Psoas muscle (tissue), 8 donors: ENCODE measurements at regions of chr22 and their contacts with region 1.

Region 1: DNA sequence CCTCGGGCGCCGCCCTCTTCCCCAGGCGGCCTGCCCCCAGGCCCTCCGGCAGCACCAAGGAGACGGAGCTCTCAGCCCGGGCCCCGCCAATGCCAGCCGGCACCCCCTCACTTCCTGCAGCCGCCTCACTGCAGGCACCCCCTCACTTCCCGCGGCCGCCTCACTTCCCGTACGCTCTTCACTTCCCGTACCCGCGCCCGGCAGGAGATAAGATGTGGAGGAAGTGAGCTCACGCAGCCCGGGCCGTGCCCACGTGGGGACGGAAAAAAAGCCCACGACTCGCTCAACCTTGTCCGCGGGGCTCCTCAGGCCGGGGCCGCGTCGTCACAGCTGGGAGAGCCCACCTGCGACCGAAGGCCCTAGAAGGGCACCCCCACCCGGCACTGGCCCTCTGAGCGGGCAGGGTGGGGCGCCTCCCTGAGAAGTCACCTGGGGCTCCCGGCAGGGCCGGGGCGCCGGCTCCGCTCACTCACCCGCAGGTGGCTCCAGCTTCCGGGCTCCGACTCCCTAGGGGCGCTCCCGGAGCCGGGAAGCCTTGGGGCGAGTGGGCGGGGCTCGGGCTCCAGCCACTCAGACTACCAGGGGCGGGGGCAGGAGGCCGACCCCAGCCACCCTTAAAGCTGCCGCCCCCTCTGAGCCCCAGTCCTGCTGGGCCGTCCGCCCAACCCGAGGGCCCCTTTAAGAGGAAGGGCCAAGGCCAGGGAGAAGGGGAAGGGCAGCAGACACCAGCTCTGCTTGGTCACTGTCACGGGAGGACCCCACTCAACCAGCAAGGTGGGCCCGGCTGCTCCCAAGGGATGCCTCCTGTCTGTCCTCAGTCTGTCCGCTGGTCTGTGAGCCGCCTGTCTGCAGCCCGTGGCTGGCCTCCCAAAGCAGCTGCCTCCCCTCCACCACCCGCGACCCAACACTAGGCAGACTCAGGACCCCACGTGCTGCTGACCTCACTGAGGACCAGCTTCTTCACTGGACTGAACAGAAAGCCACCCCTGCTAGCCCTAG is 31.4 kb downstream of the PISD start:
- DNase-seq: peak; percentile 87 to 89
- ATAC-seq: peak; percentile 36 to 75 (median 62)
- H3K4me3 ChIP-seq: peak overlapping the region; percentile 79
- H3K27ac ChIP-seq: peak overlapping the region; percentile 83
- H3K4me1 ChIP-seq: peaks cover 38% of the 10 kb centered on the region
- H3K27me3 ChIP-seq: no peaks in the 10 kb centered on the region
- CTCF ChIP-seq: no peak

Region 2: GRCh38 chr22:31530823-31531195 is 99.8 kb before region 1 on chr22:
- intact Hi-C with region 1: no loop called
- DNase-seq: no peak
- ATAC-seq: no peak
- H3K4me3 ChIP-seq: no peak overlapping the region
- H3K27ac ChIP-seq: no peak overlapping the region
- H3K4me1 ChIP-seq: no peaks in the 10 kb centered on the region
- H3K27me3 ChIP-seq: no peaks in the 10 kb centered on the region
- CTCF ChIP-seq: no peak

Region 3: GRCh38 chr22:31561238-31561887 is 69.3 kb before region 1 on chr22:
- intact Hi-C with region 1: loop called (anchors 1 to 5 kb)
- DNase-seq: peak; percentile 54 to 64
- ATAC-seq: peak; percentile 72 to 96 (median 92)
- H3K4me3 ChIP-seq: no peak overlapping the region
- H3K27ac ChIP-seq: no peak overlapping the region
- H3K4me1 ChIP-seq: no peaks in the 10 kb centered on the region
- H3K27me3 ChIP-seq: no peaks in the 10 kb centered on the region
- CTCF ChIP-seq: peak; percentile 60